ENCODE measurements at regions of chr14 and their contacts with region 1.

Region 1: GRCh38 chr14:70809543-70810244 is 381 bp upstream of the MAP3K9 start:
- DNase-seq: peak; percentile 99
- H3K4me3 ChIP-seq: peak overlapping the region; percentile 51 to 93 (median 88)
- H3K27ac ChIP-seq: peak overlapping the region; percentile 73
- H3K4me1 ChIP-seq: peaks cover 28% of the 10 kb centered on the region
- H3K27me3 ChIP-seq: no peaks in the 10 kb centered on the region
- CTCF ChIP-seq: no peak

Region 2: DNA sequence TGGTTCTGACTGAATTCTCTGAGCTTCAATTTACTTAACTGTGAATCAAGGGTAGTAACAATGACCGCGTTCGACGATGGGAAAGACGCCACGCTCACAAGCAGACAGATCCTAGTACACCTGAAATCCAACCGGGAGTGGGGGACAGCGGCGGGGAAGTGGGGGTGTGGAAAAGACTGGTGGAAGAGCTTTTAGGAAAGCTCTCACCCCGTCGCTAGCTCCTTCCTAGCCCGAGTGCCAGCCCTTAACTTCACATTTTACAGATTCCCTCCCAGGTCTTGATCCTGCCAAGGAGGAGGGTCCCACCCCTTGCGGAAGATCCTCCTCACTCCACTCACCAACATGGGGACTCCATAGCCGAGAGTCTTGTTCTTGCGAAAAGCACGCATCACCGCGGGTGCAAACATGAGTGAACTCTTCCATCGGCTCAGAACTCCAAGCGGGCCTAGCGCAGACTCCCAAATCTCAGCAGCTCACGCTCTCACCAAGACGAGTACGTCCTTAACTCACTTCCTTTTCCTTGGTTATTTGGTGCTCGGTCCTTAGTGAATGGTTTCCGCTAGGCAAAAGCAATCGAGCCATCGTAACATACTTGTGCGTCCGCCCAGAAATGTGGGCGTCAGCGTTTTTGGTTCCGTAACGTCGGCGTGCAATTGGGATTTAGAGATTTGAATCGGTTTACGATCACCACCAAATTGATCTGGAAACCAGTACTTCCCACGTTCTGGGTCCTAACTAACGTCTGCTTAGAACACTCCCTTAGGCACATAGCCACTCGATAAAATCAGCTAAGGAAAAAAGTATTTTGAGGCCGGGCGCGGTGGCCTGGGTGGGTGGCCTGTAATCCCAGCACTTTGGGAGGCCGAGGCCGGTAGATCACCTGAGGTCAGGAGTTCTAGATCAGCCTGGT is 450.3 kb before region 1 on chr14 and contains the start of gene COX16:
- CTCF ChIA-PET with region 1: no interaction called
- dilution Hi-C with region 1: no loop called
- in situ Hi-C with region 1: no loop called
- intact Hi-C with region 1: loop called (anchors 10 kb)
- DNase-seq: peak; percentile 97
- H3K4me3 ChIP-seq: peak within 1 kb of the TSS; percentile 71 to 97 (median 89)
- H3K27ac ChIP-seq: peak within 1 kb of the TSS; percentile 67
- H3K4me1 ChIP-seq: peaks cover 10% of the 10 kb centered on the region
- H3K27me3 ChIP-seq: no peaks in the 10 kb centered on the region
- CTCF ChIP-seq: no peak
- total RNA-seq, gene COX16: 26.2 to 31.6 TPM

Region 3: DNA sequence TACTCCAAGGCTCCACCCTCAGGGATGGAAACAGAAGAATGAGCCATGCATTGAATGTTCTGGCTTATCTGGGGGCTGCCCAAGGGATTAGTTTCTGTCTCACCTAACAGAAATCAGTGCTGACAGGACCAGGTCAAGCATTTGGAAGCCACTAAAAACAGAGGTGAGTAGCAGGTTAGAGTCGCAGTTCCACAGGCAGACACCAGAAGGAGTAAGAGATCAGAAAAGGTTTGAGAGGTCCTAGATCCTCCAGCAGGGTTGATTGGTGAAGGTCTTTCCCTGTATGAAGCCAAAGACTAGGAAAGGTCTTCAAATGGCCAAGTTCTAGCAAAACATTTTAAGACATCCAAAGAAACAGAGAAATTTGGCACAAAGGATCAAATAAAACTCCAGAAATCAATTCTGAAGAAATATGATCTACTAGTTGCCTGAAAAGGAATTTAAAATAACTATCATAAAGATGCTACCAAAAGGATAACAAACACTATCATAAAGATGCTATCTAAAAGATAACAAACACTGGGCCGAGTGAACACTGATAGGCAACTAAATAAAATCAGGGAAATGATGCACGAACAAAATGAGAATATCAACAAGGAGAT is 187.5 kb before region 1 on chr14:
- CTCF ChIA-PET with region 1: no interaction called
- dilution Hi-C with region 1: no loop called
- in situ Hi-C with region 1: loop called (anchors 10 kb)
- intact Hi-C with region 1: loop called (anchors 2 kb)
- DNase-seq: peak; percentile 52
- H3K4me3 ChIP-seq: no peak overlapping the region
- H3K27ac ChIP-seq: no peak overlapping the region
- H3K4me1 ChIP-seq: peaks cover 7% of the 10 kb centered on the region
- H3K27me3 ChIP-seq: no peaks in the 10 kb centered on the region
- CTCF ChIP-seq: peak; percentile 92 to 95

Region 4: DNA sequence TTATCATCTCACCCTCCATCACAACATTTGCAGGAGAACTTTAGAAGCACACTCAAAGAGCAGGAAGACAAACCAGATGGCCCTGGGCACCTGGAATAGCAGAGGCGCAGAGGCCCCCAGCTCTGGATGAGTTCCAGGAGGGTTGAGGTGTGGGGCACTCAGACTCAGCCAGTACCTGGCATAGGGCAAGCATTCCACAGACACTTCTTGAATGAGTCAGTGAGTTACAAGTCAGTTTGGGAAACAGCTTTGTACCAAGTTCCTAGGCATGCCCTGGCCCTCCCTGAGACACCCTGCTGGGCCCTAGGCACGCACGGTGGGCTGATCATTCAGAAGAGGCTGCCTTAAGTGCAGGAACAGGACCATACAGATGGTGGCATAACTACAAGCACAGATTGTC is 54.7 kb before region 1 on chr14:
- CTCF ChIA-PET with region 1: no interaction called
- dilution Hi-C with region 1: no loop called
- in situ Hi-C with region 1: no loop called
- intact Hi-C with region 1: loop called (anchors 1 kb)
- DNase-seq: peak; percentile 91
- H3K4me3 ChIP-seq: no peak overlapping the region
- H3K27ac ChIP-seq: peak overlapping the region; percentile 88
- H3K4me1 ChIP-seq: peaks cover 37% of the 10 kb centered on the region
- H3K27me3 ChIP-seq: no peaks in the 10 kb centered on the region
- CTCF ChIP-seq: peak in 1 of 2 donors; percentile 7

Region 5: GRCh38 chr14:70789361-70789760 is 20.3 kb before region 1 on chr14:
- CTCF ChIA-PET with region 1: no interaction called
- dilution Hi-C with region 1: no loop called
- in situ Hi-C with region 1: no loop called
- intact Hi-C with region 1: loop called (anchors 1 kb)
- DNase-seq: peak; percentile 74
- H3K4me3 ChIP-seq: no peak overlapping the region
- H3K27ac ChIP-seq: peak overlapping the region; percentile 45
- H3K4me1 ChIP-seq: peaks cover 61% of the 10 kb centered on the region
- H3K27me3 ChIP-seq: no peaks in the 10 kb centered on the region
- CTCF ChIP-seq: no peak

Measured in mammary epithelial cell (primary cell).